ENCODE measurements at regions of chr5 and their contacts with region 1.

Region 1: DNA sequence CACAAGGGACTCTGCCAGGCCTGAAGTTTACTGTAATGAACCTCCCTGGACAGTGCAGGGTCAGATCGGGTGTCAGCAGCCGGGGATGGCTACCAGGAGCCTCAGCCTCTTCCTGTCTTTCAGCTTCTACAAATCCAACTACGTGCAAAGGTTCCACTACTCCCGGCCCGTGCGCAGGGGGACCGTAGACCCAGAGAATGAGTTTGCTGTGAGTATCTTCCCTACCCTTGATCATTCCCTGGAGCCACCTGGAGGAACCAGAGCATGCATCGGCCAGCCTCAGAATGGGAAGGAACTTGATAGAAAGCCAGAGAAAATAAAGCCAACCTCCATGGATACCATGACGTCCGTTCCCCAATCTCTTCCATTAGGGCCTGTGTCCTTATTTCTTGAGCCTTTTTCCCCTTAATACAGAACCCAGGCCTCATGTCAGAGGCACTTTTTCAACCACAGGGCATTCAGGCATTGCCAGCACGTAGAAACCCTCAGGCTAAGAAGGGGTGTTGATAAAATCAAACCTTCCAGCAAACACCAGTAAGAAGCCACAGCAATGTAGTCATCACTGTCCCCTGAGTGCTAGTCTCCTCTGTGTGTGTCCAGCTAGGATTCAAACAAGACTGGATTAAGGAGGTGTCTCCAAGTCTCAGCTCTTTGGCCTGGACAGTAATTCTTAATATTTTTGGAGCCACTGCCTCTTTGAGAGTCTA is 49.0 kb upstream of the FOXI1 start:
- DNase-seq: no peak
- H3K4me3 Mint-ChIP-seq: no peak overlapping the region
- H3K27ac Mint-ChIP-seq: no peak overlapping the region
- H3K4me1 Mint-ChIP-seq: no peaks in the 10 kb centered on the region
- H3K27me3 Mint-ChIP-seq: no peaks in the 10 kb centered on the region

Region 2: GRCh38 chr5:170070556-170071412 is 14.1 kb after region 1 on chr5:
- CTCF ChIA-PET with region 1: interaction called, 13 read pairs
- POLR2A ChIA-PET with region 1: no interaction called
- DNase-seq: no peak
- H3K4me3 Mint-ChIP-seq: no peak overlapping the region
- H3K27ac Mint-ChIP-seq: no peak overlapping the region
- H3K4me1 Mint-ChIP-seq: no peaks in the 10 kb centered on the region
- H3K27me3 Mint-ChIP-seq: no peaks in the 10 kb centered on the region

Region 3: GRCh38 chr5:170095646-170096045 is 38.9 kb after region 1 on chr5:
- CTCF ChIA-PET with region 1: no interaction called
- POLR2A ChIA-PET with region 1: no interaction called
- DNase-seq: no peak
- H3K4me3 Mint-ChIP-seq: no peak overlapping the region
- H3K27ac Mint-ChIP-seq: no peak overlapping the region
- H3K4me1 Mint-ChIP-seq: no peaks in the 10 kb centered on the region
- H3K27me3 Mint-ChIP-seq: peaks cover 9% of the 10 kb centered on the region